Activated naive CD8-positive, alpha-beta T cell treated with anti-CD3 and anti-CD28 coated beads, Interleukin-2, amount 10 ng/mL, durations not matched to agents 7 days and 5 days (primary cell): ENCODE measurements at regions of chr16 and their contacts with region 1.

Region 1: GRCh38 chr16:11255737-11256660 is at the start of gene SOCS1:
- DNase-seq: peak; percentile 98
- ATAC-seq: peak; percentile 68
- H3K4me3 Mint-ChIP-seq: peak within 1 kb of the TSS; percentile 98
- H3K27ac Mint-ChIP-seq: peak within 1 kb of the TSS; percentile 98
- H3K4me1 Mint-ChIP-seq: peaks cover 47% of the 10 kb centered on the region
- H3K27me3 Mint-ChIP-seq: no peaks in the 10 kb centered on the region
- total RNA-seq, gene SOCS1: 165 to 176 TPM

Region 2: GRCh38 chr16:10964039-10964890 is 291.7 kb before region 1 on chr16:
- POLR2A ChIA-PET with region 1: interaction called, 32 read pairs
- DNase-seq: peak; percentile 88
- ATAC-seq: peak; percentile 66
- H3K4me3 Mint-ChIP-seq: peak overlapping the region; percentile 41
- H3K27ac Mint-ChIP-seq: peak overlapping the region; percentile 63
- H3K4me1 Mint-ChIP-seq: peaks cover 46% of the 10 kb centered on the region
- H3K27me3 Mint-ChIP-seq: no peaks in the 10 kb centered on the region

Region 3: DNA sequence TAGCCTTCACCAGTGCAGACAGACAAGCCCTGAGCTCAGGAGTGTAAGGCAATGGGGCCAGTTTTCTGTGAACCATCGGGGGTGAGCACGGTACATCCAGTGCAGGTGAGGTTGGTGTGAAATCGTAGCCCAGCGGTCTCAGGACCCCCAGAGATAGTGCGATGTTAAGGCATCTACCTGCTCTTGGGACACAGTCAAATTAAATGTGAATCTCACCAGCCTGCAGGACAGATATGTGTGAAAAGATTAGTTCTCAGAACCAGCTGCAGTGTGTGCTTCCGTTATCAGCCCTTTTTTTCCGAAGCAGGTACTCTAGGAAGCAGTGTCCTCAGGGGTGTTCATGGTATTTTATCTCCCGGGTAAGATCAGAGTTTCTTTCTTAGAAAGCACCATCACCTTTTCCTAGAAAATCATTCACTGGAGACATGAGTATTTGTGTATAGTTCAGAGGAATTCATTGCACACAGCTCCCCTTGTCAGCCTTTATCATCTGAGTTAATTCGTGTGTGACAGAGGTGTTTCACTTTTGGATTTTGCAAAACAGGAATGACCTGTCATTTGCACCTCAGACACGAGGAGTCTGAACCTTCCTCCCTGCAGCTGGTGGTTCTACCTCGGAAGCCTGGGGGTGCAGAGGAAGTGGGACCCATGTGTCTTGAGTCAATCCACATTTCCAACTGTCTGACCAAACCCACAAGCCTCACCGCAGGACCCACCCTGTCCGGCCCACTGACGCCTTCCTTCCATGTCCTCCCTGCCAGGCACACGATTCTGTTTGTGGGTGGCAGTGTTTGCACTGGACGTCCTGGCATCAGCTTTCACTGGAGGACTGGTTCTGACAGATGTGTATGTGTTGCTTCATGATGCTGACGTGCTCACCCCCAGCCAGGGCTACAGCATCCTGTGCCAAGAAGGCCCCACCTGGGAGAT is 203.9 kb before region 1 on chr16:
- POLR2A ChIA-PET with region 1: interaction called, 78 read pairs
- DNase-seq: peak; percentile 86
- ATAC-seq: peak; percentile 85
- H3K4me3 Mint-ChIP-seq: peak overlapping the region; percentile 43
- H3K27ac Mint-ChIP-seq: peak overlapping the region; percentile 93
- H3K4me1 Mint-ChIP-seq: peaks cover 78% of the 10 kb centered on the region
- H3K27me3 Mint-ChIP-seq: no peaks in the 10 kb centered on the region

Region 4: DNA sequence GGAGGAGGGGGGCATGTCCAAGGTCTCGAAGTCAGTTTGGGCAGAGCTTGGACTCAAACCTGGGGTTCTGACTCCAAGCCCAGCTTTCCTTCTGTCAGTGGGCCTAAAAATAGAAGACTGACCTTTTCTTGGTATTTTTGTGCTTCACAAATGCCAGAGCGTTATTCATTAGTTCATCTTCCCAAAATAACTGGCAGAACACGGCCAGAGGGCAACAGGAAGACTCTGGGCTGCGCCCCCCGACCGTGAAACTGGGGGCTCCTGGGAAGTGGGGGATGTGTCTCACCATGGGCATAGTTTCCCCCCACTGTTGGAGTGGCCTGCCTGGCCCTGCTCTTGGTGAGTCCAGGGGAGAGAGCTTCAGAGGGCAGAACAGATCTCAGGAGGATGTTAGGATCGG is 94.0 kb before region 1 on chr16:
- POLR2A ChIA-PET with region 1: interaction called, 50 read pairs
- DNase-seq: no peak
- ATAC-seq: no peak
- H3K4me3 Mint-ChIP-seq: no peak overlapping the region
- H3K27ac Mint-ChIP-seq: peak overlapping the region; percentile 90
- H3K4me1 Mint-ChIP-seq: peaks cover 78% of the 10 kb centered on the region
- H3K27me3 Mint-ChIP-seq: no peaks in the 10 kb centered on the region

Region 5: GRCh38 chr16:11297492-11298142 is 41.6 kb after region 1 on chr16:
- POLR2A ChIA-PET with region 1: interaction called, 68 read pairs
- DNase-seq: peak; percentile 81
- ATAC-seq: peak; percentile 82
- H3K4me3 Mint-ChIP-seq: peak overlapping the region; percentile 77
- H3K27ac Mint-ChIP-seq: peak overlapping the region; percentile 91
- H3K4me1 Mint-ChIP-seq: peaks cover 55% of the 10 kb centered on the region
- H3K27me3 Mint-ChIP-seq: peaks cover 4% of the 10 kb centered on the region

Region 6: GRCh38 chr16:11356573-11357331 is 100.8 kb after region 1 on chr16:
- POLR2A ChIA-PET with region 1: interaction called, 190 read pairs
- DNase-seq: peak; percentile 71
- ATAC-seq: no peak
- H3K4me3 Mint-ChIP-seq: peak overlapping the region; percentile 48
- H3K27ac Mint-ChIP-seq: peak overlapping the region; percentile 43
- H3K4me1 Mint-ChIP-seq: peaks cover 79% of the 10 kb centered on the region
- H3K27me3 Mint-ChIP-seq: no peaks in the 10 kb centered on the region